Activated CD4-positive, alpha-beta memory T cell treated with anti-CD3 and anti-CD28 coated beads for 36 hours (primary cell): ENCODE measurements at regions of chr5 and their contacts with region 1.

Region 1: GRCh38 chr5:135376961-135377624 is 21.9 kb downstream of the MACROH2A1 start:
- DNase-seq: peak; percentile 74
- H3K4me3 Mint-ChIP-seq: no peak overlapping the region
- H3K27ac Mint-ChIP-seq: peak overlapping the region; percentile 71
- H3K4me1 Mint-ChIP-seq: peaks cover 68% of the 10 kb centered on the region
- H3K27me3 Mint-ChIP-seq: no peaks in the 10 kb centered on the region

Region 2: GRCh38 chr5:135392256-135392655 is 15.2 kb after region 1 on chr5:
- CTCF ChIA-PET with region 1: no interaction called
- POLR2A ChIA-PET with region 1: no interaction called
- intact Hi-C with region 1: loop called (anchors 1 kb)
- DNase-seq: peak; percentile 41
- H3K4me3 Mint-ChIP-seq: no peak overlapping the region
- H3K27ac Mint-ChIP-seq: no peak overlapping the region
- H3K4me1 Mint-ChIP-seq: peaks cover 79% of the 10 kb centered on the region
- H3K27me3 Mint-ChIP-seq: no peaks in the 10 kb centered on the region

Region 3: DNA sequence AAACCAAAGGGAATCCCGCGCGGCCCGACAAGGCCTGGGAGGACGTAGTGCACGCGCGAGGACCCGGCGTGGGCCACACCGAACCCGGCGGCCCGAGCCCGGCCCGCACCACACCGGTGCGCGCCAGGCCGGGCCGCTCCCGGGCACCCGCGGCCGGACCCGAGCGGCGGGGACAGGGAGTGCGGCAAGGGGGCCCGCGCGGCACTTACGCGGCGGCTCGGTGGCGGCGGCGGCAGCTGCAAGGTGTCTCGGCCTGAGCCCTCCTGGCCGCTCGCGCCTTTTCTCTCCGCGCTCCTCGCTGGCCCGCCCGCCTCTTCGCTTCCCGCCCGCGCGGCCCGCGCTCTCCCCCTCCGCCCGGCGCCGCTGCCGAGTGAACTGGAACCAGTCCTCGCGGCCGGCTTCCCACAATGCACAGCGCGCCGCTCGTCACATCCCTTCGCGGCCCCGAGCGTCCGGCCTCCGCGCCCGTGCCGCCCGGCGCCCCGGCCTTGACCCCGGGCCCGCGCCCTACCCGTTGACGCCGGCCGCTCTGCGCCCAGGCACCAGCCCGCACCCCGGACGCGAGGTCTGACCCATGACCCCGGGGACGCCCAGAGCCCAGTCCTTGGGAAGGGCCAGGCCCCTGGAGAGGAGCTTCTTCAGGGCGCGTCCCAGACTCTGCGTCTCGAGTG is 21.9 kb after region 1 on chr5 and contains the start of gene MACROH2A1:
- CTCF ChIA-PET with region 1: no interaction called
- POLR2A ChIA-PET with region 1: interaction called, 4 read pairs
- intact Hi-C with region 1: loop called (anchors 1 kb)
- DNase-seq: peak; percentile 87
- H3K4me3 Mint-ChIP-seq: peak within 1 kb of the TSS; percentile 85
- H3K27ac Mint-ChIP-seq: peak within 1 kb of the TSS; percentile 75
- H3K4me1 Mint-ChIP-seq: peaks cover 46% of the 10 kb centered on the region
- H3K27me3 Mint-ChIP-seq: no peaks in the 10 kb centered on the region
- total RNA-seq, gene MACROH2A1: 159 to 161 TPM